Activated B cell treated with CpG ODN at 0.5 μM for 24 hours (primary cell): ENCODE measurements at regions of chr5 and their contacts with region 1.

Region 1: DNA sequence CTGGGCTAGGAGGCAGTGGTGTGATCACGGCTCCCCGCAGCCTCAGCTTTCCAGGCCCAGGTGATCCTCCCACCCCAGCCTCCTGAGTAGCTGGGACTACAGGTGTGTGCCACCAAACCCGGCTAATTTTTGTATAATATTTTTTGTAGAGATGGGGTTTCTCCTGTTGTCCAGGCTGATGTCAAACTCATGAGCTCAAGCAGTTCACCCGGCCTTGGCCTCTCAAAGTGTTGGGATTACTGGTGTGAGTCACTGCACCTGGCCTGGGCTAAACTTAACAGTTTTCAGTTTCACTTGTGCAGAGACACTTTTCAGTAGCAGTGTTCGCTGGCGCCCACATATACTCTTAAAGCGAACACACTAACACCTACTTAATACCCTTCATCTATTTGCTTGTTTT is 205.6 kb upstream of the ZNF608 start:
- DNase-seq: peak; percentile 25
- ATAC-seq: peak; percentile 82
- H3K4me3 Mint-ChIP-seq: no peak overlapping the region
- H3K27ac Mint-ChIP-seq: peak overlapping the region; percentile 78
- H3K4me1 Mint-ChIP-seq: peaks cover 21% of the 10 kb centered on the region
- H3K27me3 Mint-ChIP-seq: no peaks in the 10 kb centered on the region
- CTCF ChIP-seq: no peak

Region 2: GRCh38 chr5:124920909-124921666 is 31.0 kb before region 1 on chr5:
- CTCF ChIA-PET with region 1: no interaction called
- POLR2A ChIA-PET with region 1: interaction called, 4 read pairs
- intact Hi-C with region 1: loop called (anchors 2 kb)
- DNase-seq: no peak
- ATAC-seq: peak; percentile 83
- H3K4me3 Mint-ChIP-seq: no peak overlapping the region
- H3K27ac Mint-ChIP-seq: no peak overlapping the region
- H3K4me1 Mint-ChIP-seq: peaks cover 10% of the 10 kb centered on the region
- H3K27me3 Mint-ChIP-seq: no peaks in the 10 kb centered on the region
- CTCF ChIP-seq: no peak

Region 3: DNA sequence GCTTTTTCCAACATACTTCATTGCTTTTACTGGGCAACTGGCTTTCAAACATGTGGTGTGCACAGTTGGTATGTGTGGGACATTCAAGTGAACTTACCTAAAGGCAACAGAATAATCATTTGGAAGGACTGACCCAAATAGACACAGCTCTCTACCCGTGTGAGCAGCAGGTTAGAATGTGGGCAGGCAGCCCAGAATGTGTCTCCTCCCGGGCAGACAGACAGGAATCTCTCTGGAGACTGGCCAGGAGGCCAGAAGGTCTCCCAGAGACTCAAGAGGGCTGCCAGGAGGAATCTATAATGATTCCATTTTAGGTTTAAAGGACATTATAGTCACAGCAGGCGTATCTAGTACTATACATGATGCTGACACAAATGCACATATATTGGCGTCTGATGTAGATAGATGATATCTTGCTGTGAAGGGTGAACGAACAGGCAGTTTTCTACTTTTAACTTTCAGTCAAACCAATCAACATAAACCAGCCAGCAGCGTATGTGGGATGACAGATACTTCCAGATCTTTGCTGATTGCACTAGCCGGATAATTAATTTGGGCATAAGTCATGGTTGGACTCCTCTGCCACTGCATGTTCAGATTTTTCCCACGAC is 91.8 kb after region 1 on chr5:
- CTCF ChIA-PET with region 1: no interaction called
- POLR2A ChIA-PET with region 1: no interaction called
- intact Hi-C with region 1: no loop called
- DNase-seq: no peak
- ATAC-seq: no peak
- H3K4me3 Mint-ChIP-seq: no peak overlapping the region
- H3K27ac Mint-ChIP-seq: no peak overlapping the region
- H3K4me1 Mint-ChIP-seq: peaks cover 8% of the 10 kb centered on the region
- H3K27me3 Mint-ChIP-seq: no peaks in the 10 kb centered on the region
- CTCF ChIP-seq: no peak

Region 4: DNA sequence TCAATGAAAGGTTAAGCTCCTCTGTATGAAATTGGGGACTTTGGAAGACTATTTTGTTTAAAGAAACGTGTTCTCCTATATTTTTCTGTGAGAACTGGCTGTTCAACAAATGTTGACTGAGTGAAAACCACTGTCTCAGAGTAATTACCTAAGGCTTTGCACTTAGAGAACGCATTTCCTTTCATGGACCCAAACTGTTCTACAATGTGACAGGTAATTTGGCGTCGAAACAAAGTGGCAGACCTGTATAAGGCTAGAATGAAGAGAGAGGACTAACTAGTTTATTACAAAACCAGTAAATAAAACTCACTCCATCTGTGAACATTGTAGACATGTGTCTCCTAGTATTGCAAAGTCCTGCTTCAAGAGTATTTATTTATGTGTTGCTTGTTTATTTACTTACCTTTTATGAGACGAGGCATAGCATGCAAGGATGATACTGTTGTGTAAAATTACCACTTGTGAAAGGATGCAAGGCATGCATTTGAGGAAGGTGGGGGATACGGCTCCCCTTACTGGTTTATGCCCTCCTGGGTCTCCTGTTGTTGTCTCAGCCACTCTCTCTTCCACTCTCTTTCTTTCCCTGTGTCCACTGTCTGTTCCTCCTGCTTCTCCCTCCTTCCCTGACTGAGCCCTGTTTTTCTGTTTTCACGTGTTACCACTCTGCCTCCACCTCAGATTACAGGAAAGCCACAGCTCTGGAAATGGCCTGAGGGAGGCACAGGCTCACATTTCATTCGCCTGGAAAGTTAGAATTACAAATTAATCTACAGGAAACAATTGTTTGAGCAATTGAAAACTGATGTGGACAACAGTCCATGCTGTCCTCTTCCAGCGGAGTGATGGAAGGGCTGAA is 238.4 kb after region 1 on chr5:
- CTCF ChIA-PET with region 1: no interaction called
- POLR2A ChIA-PET with region 1: no interaction called
- intact Hi-C with region 1: no loop called
- DNase-seq: no peak
- ATAC-seq: no peak
- H3K4me3 Mint-ChIP-seq: no peak overlapping the region
- H3K27ac Mint-ChIP-seq: no peak overlapping the region
- H3K4me1 Mint-ChIP-seq: peaks cover 26% of the 10 kb centered on the region
- H3K27me3 Mint-ChIP-seq: no peaks in the 10 kb centered on the region
- CTCF ChIP-seq: no peak